Naive thymus-derived CD4-positive, alpha-beta T cell (primary cell): ENCODE measurements at regions of chr7 and their contacts with region 1.

Region 1: DNA sequence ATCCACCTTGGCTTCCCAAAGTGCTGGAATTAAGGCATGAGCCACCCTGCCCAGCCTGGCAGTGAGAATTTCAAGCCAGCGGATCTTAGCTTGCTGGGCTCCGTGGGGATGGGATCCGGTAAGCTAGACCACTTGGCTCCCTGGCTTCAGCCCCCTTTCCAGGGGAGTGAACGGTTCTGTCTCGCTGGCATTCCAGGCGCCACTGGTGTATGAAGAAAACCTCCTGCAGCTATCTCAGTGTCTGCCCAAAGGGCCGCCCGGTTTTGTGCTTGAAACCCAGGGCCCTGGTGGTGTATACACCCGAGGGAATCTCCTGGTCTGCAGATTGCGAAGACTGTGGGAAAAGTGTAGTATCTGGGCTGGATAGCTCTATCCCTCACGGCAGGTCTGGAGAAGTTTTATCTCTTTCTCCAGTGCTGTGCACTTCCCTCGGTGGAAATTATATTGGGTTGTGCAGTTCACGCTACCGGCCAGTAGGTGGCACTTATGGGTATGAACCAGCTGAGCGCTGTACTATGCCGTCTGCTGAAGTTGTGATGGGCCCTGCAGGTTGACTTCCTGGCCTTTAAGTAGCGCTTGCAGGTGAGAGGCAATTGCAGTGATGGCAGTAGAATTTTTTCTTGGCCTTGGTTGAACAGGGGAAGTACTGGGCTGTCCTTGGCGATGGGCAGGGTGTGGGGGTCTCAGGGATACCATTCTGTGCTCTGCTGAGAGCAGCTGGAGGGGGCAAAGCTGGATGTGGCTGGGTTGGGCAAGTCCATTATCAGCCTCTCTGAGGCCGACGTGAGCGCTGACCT is 138.0 kb upstream of the MTPN start:
- DNase-seq: peak in 3 of 9 donors; percentile 5 to 35 (median 15)
- ATAC-seq: peak; percentile 83
- H3K4me3 ChIP-seq: no peak overlapping the region
- H3K4me3 Mint-ChIP-seq: no peak overlapping the region
- H3K27ac ChIP-seq: no peak overlapping the region
- H3K27ac Mint-ChIP-seq: no peak overlapping the region
- H3K4me1 ChIP-seq: no peaks in the 10 kb centered on the region
- H3K4me1 Mint-ChIP-seq: peaks cover 0 to 4% (median 0%) of the 10 kb centered on the region in 7 donors
- H3K27me3 ChIP-seq: no peaks in the 10 kb centered on the region
- H3K27me3 Mint-ChIP-seq: peaks cover 0 to 10% (median 0%) of the 10 kb centered on the region in 5 donors

Region 2: GRCh38 chr7:136783934-136784333 is 668.8 kb after region 1 on chr7:
- CTCF ChIA-PET with region 1: no interaction called
- POLR2A ChIA-PET with region 1: no interaction called
- intact Hi-C with region 1: no loop called
- DNase-seq: no peak
- ATAC-seq: no peak
- H3K4me3 ChIP-seq: no peak overlapping the region
- H3K4me3 Mint-ChIP-seq: no peak overlapping the region
- H3K27ac ChIP-seq: no peak overlapping the region
- H3K27ac Mint-ChIP-seq: no peak overlapping the region
- H3K4me1 ChIP-seq: no peaks in the 10 kb centered on the region
- H3K4me1 Mint-ChIP-seq: no peaks in the 10 kb centered on the region
- H3K27me3 ChIP-seq: no peaks in the 10 kb centered on the region
- H3K27me3 Mint-ChIP-seq: no peaks in the 10 kb centered on the region

Region 3: DNA sequence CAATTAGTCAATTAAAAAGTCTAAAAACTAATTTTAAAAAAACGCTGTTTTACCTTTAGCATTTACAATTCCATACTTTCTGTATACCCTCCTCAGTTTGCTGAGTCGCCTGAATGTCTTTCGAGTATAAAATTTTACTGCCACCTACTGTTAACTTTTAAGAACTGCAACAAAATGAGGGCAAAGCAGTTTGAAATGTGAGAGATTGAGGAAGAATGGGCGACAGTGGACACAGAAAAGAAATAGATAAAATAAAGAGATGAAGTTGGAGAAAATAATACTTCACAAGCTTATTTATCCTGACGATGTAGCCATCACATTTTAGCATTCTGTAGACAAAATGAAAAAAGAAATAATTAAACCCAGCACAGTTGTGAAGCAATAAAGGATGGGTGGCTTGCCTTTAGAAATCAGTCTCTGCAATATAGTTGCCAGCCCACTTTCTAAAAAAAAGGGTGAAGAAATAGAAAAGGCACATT is 1339.1 kb after region 1 on chr7:
- CTCF ChIA-PET with region 1: no interaction called
- POLR2A ChIA-PET with region 1: no interaction called
- intact Hi-C with region 1: loop called in 1 of 2 experiments (anchors 10 kb)
- DNase-seq: peak in 3 of 9 donors; percentile 3 to 18 (median 13)
- ATAC-seq: no peak
- H3K4me3 ChIP-seq: no peak overlapping the region
- H3K4me3 Mint-ChIP-seq: no peak overlapping the region
- H3K27ac ChIP-seq: no peak overlapping the region
- H3K27ac Mint-ChIP-seq: no peak overlapping the region
- H3K4me1 ChIP-seq: no peaks in the 10 kb centered on the region
- H3K4me1 Mint-ChIP-seq: no peaks in the 10 kb centered on the region
- H3K27me3 ChIP-seq: no peaks in the 10 kb centered on the region
- H3K27me3 Mint-ChIP-seq: peaks cover 0 to 17% (median 0%) of the 10 kb centered on the region in 5 donors